ENCODE measurements at regions of chr4 and their contacts with region 1.

Region 1: DNA sequence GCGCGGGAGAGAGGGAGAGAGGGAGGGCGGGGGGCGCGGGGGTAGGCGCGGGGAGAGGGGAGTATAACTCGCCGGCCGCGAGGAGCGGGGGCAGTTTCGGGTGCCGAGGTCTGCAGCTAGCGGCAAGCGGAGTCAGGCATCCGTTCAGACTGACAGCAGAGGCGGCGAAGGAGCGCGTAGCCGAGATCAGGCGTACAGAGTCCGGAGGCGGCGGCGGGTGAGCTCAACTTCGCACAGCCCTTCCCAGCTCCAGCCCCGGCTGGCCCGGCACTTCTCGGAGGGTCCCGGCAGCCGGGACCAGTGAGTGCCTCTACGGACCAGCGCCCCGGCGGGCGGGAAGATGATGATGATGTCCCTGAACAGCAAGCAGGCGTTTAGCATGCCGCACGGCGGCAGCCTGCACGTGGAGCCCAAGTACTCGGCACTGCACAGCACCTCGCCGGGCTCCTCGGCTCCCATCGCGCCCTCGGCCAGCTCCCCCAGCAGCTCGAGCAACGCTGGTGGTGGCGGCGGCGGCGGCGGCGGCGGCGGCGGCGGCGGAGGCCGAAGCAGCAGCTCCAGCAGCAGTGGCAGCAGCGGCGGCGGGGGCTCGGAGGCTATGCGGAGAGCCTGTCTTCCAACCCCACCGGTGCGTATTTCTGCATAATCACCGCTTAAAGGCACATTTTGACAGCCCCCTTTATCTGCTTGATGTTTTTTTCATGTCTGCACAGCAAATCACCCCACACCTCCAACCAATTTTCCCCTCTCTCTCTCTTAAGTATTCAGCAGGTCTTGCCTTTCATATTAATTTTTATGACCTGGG is at the start of gene POU4F2:
- DNase-seq: peak; percentile 85
- H3K4me3 ChIP-seq: peak within 1 kb of the TSS; percentile 61
- H3K27ac ChIP-seq: no peak within 1 kb of the TSS
- H3K4me1 ChIP-seq: peaks cover 10% of the 10 kb centered on the region
- H3K27me3 ChIP-seq: peaks cover 38% of the 10 kb centered on the region
- CTCF ChIP-seq: no peak
- total RNA-seq, gene POU4F2: 2.6 and 4.6 TPM in 2 replicates

Region 2: DNA sequence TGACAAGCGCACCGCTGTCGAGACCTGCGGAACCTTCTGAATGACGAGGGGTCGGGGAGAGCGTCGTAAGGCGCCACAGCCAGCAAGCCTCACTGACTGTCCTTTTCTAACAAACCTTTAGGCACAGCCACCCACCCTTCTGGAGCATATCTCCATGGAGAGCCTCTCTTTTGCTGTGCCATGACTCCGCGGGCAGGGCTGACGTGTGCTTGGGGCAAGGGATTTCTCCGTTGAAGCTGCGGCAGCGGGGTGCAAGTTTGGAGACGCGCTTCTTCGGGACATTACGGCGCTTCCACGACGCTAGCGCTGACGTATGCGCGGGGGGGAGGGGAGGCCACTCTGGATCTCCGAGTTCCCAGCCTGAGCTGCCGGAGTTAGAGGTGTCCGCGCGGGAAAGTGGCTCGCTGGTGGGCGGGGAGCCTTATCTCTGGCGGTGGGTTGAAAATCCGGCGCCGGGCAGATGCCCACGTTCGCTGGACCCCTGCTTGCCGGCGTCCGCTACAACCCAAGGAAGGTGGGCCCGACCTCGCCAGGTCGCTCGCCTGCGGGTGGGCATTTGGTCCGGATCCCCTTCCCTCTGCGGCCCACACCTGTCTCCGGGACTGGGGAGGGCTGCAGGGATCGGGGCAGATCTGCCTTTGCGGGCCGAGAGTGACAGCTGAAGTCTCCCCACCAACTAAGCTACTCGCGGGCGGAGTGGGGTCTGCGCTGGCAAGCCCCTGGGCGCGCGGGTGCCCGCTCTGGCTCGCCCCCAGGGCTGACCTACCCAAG is 116.7 kb before region 1 on chr4:
- CTCF ChIA-PET with region 1: no interaction called
- POLR2A ChIA-PET with region 1: interaction called, 3 read pairs
- intact Hi-C with region 1: loop called (anchors 5 kb)
- DNase-seq: peak; percentile 93
- H3K4me3 ChIP-seq: peak overlapping the region; percentile 81
- H3K27ac ChIP-seq: peak overlapping the region; percentile 95
- H3K4me1 ChIP-seq: peaks cover 19% of the 10 kb centered on the region
- H3K27me3 ChIP-seq: no peaks in the 10 kb centered on the region
- CTCF ChIP-seq: no peak

Region 3: DNA sequence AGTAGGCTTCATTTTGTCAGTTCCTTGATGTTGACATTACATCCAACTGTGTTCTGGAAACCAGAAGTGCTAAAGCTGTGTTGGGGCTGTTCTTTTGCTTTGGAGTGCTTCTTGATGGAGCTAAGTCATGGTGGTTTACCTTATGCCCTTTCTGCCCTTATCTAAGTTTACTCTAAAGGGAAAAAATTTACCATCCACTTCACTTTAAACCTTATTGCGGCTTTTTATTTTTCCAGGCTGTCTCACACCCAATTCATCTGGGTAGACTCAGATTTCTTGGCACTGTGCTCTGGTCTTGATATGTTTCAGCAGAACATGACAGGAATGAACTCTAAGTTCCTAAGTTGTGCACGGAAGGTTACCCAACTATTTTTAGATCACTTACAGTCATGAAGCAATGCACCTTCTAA is 411.4 kb after region 1 on chr4:
- CTCF ChIA-PET with region 1: no interaction called
- POLR2A ChIA-PET with region 1: no interaction called
- intact Hi-C with region 1: no loop called
- DNase-seq: no peak
- H3K4me3 ChIP-seq: no peak overlapping the region
- H3K27ac ChIP-seq: no peak overlapping the region
- H3K4me1 ChIP-seq: peaks cover 7% of the 10 kb centered on the region
- H3K27me3 ChIP-seq: no peaks in the 10 kb centered on the region
- CTCF ChIP-seq: no peak

Measured in A673 (cell line).